CD8-positive, alpha-beta T cell (primary cell): ENCODE measurements at regions of chr22 and their contacts with region 1.

Region 1: DNA sequence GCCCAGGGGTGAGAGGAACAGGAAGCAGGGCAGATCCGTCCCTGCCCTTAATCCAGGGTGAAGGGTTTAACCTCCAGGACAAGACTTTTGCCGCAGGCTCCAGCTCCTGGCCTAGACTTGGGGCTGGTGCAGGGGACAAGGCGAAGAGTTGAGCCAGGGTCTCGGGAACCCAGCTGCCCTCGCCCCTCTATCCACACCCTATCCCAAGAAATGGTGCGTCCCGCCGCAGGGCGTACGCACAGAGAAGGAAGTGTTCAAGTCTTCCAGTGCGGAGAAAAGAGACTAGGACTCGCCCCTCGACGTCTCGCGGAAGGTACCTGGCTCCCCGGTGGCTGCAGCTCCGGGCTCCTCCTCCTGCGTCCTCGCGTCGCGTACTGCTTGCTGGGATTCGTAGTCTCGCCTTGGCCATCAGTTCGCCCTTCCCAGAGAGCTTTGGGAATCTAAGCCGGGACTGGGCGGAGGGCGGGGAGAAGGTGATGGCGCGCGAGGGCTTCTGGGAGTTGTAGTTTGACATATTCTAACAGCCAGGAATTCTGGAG is at the start of gene ZMAT5:
- DNase-seq: peak; percentile 77 to 97 (median 92)
- ATAC-seq: peak; percentile 94
- H3K4me3 ChIP-seq: peak within 1 kb of the TSS; percentile 83 to 95
- H3K4me3 Mint-ChIP-seq: peak within 1 kb of the TSS; percentile 100
- H3K27ac ChIP-seq: peak within 1 kb of the TSS; percentile 72 to 84
- H3K27ac Mint-ChIP-seq: peak within 1 kb of the TSS; percentile 98
- H3K4me1 ChIP-seq: peaks cover 23% of the 10 kb centered on the region
- H3K4me1 Mint-ChIP-seq: peaks cover 41% of the 10 kb centered on the region
- H3K27me3 ChIP-seq: no peaks in the 10 kb centered on the region
- H3K27me3 Mint-ChIP-seq: no peaks in the 10 kb centered on the region
- CTCF ChIP-seq: no peak
- total RNA-seq, gene ZMAT5: 4.3 to 5.2 TPM

Region 2: GRCh38 chr22:28882878-28883656 is 883.6 kb before region 1 on chr22 and contains the start of gene ZNRF3:
- CTCF ChIA-PET with region 1: no interaction called
- POLR2A ChIA-PET with region 1: no interaction called
- intact Hi-C with region 1: loop called in 1 of 2 experiments (anchors 10 kb)
- DNase-seq: peak; percentile 79 to 95 (median 92)
- ATAC-seq: peak; percentile 94
- H3K4me3 ChIP-seq: peak within 1 kb of the TSS; percentile 52 to 77
- H3K4me3 Mint-ChIP-seq: peak within 1 kb of the TSS; percentile 87
- H3K27ac ChIP-seq: no peak within 1 kb of the TSS
- H3K27ac Mint-ChIP-seq: no peak within 1 kb of the TSS
- H3K4me1 ChIP-seq: peaks cover 13% of the 10 kb centered on the region
- H3K4me1 Mint-ChIP-seq: peaks cover 23% of the 10 kb centered on the region
- H3K27me3 ChIP-seq: peaks cover 5 to 9% of the 10 kb centered on the region in 2 experiments
- H3K27me3 Mint-ChIP-seq: peaks cover 27% of the 10 kb centered on the region
- CTCF ChIP-seq: no peak
- total RNA-seq, gene ZNRF3: 0.49 to 0.69 TPM

Region 3: GRCh38 chr22:29553351-29554224 is 213.1 kb before region 1 on chr22 and contains the start of gene THOC5:
- CTCF ChIA-PET with region 1: no interaction called
- POLR2A ChIA-PET with region 1: interaction called, 3 read pairs
- intact Hi-C with region 1: loop called in 1 of 2 experiments (anchors 2 kb)
- DNase-seq: peak; percentile 73 to 94 (median 91)
- ATAC-seq: peak; percentile 95
- H3K4me3 ChIP-seq: peak within 1 kb of the TSS; percentile 57 to 94
- H3K4me3 Mint-ChIP-seq: peak within 1 kb of the TSS; percentile 88
- H3K27ac ChIP-seq: peak within 1 kb of the TSS; percentile 61 to 66
- H3K27ac Mint-ChIP-seq: peak within 1 kb of the TSS; percentile 96
- H3K4me1 ChIP-seq: peaks cover 7% of the 10 kb centered on the region
- H3K4me1 Mint-ChIP-seq: peaks cover 27% of the 10 kb centered on the region
- H3K27me3 ChIP-seq: no peaks in the 10 kb centered on the region
- H3K27me3 Mint-ChIP-seq: no peaks in the 10 kb centered on the region
- CTCF ChIP-seq: no peak
- total RNA-seq, gene THOC5: 33.5 to 35.0 TPM

Region 4: GRCh38 chr22:29603358-29604075 is 163.2 kb before region 1 on chr22 and contains the start of gene NF2:
- CTCF ChIA-PET with region 1: no interaction called
- POLR2A ChIA-PET with region 1: no interaction called
- intact Hi-C with region 1: loop called (anchors 1 kb)
- DNase-seq: peak; percentile 96 to 100 (median 98)
- ATAC-seq: peak; percentile 98
- H3K4me3 ChIP-seq: peak within 1 kb of the TSS; percentile 77 to 86
- H3K4me3 Mint-ChIP-seq: peak within 1 kb of the TSS; percentile 93
- H3K27ac ChIP-seq: peak within 1 kb of the TSS; percentile 84 to 90
- H3K27ac Mint-ChIP-seq: peak within 1 kb of the TSS; percentile 97
- H3K4me1 ChIP-seq: peaks cover 18% of the 10 kb centered on the region
- H3K4me1 Mint-ChIP-seq: peaks cover 25% of the 10 kb centered on the region
- H3K27me3 ChIP-seq: no peaks in the 10 kb centered on the region
- H3K27me3 Mint-ChIP-seq: no peaks in the 10 kb centered on the region
- CTCF ChIP-seq: no peak
- total RNA-seq, gene NF2: 22.6 to 23.2 TPM

Region 5: DNA sequence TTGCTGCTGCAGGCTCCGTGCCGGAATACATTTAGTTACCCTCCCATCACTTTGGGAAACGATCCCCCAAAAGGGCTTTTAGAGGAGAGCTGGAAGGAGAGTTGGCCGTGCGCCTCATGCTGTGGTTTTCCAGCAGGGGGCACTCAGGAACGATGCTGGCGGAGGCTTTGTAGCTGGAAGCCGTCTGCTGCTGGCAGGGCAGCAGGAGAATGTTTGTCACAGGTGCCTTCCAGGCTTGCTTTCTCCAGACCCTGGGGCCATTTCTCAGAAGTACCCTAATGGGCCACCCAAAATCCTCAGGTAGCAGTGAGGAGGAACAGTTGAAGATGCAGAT is 76.9 kb before region 1 on chr22:
- CTCF ChIA-PET with region 1: no interaction called
- POLR2A ChIA-PET with region 1: no interaction called
- intact Hi-C with region 1: no loop called
- DNase-seq: peak in 4 of 9 experiments; percentile 16 to 35 (median 29)
- ATAC-seq: no peak
- H3K4me3 ChIP-seq: no peak overlapping the region
- H3K4me3 Mint-ChIP-seq: no peak overlapping the region
- H3K27ac ChIP-seq: no peak overlapping the region
- H3K27ac Mint-ChIP-seq: no peak overlapping the region
- H3K4me1 ChIP-seq: no peaks in the 10 kb centered on the region
- H3K4me1 Mint-ChIP-seq: no peaks in the 10 kb centered on the region
- H3K27me3 ChIP-seq: no peaks in the 10 kb centered on the region
- H3K27me3 Mint-ChIP-seq: no peaks in the 10 kb centered on the region
- CTCF ChIP-seq: no peak

Region 6: GRCh38 chr22:29883045-29883774 is 116.5 kb after region 1 on chr22 and contains the start of gene MTMR3:
- CTCF ChIA-PET with region 1: no interaction called
- POLR2A ChIA-PET with region 1: interaction called, 4 read pairs
- intact Hi-C with region 1: loop called (anchors 1 kb)
- DNase-seq: peak; percentile 75 to 95 (median 93)
- ATAC-seq: peak; percentile 81
- H3K4me3 ChIP-seq: peak within 1 kb of the TSS; percentile 75 to 87
- H3K4me3 Mint-ChIP-seq: peak within 1 kb of the TSS; percentile 69
- H3K27ac ChIP-seq: peak within 1 kb of the TSS; percentile 72 to 80
- H3K27ac Mint-ChIP-seq: peak within 1 kb of the TSS; percentile 90
- H3K4me1 ChIP-seq: peaks cover 20% of the 10 kb centered on the region
- H3K4me1 Mint-ChIP-seq: peaks cover 8% of the 10 kb centered on the region
- H3K27me3 ChIP-seq: no peaks in the 10 kb centered on the region
- H3K27me3 Mint-ChIP-seq: peaks cover 3% of the 10 kb centered on the region
- CTCF ChIP-seq: peak; percentile 52
- total RNA-seq, gene MTMR3: 46.7 to 51.7 TPM

Region 7: GRCh38 chr22:31399211-31400028 is 1632.7 kb after region 1 on chr22 and contains the start of gene DRG1:
- CTCF ChIA-PET with region 1: no interaction called
- POLR2A ChIA-PET with region 1: no interaction called
- intact Hi-C with region 1: loop called in 1 of 2 experiments (anchors 5 kb)
- DNase-seq: peak; percentile 91 to 98 (median 97)
- ATAC-seq: peak; percentile 96
- H3K4me3 ChIP-seq: peak within 1 kb of the TSS; percentile 76 to 99
- H3K4me3 Mint-ChIP-seq: peak within 1 kb of the TSS; percentile 95
- H3K27ac ChIP-seq: peak within 1 kb of the TSS; percentile 82 to 87
- H3K27ac Mint-ChIP-seq: peak within 1 kb of the TSS; percentile 96
- H3K4me1 ChIP-seq: peaks cover 13% of the 10 kb centered on the region
- H3K4me1 Mint-ChIP-seq: peaks cover 31% of the 10 kb centered on the region
- H3K27me3 ChIP-seq: no peaks in the 10 kb centered on the region
- H3K27me3 Mint-ChIP-seq: no peaks in the 10 kb centered on the region
- CTCF ChIP-seq: no peak
- total RNA-seq, gene DRG1: 55.9 to 63.3 TPM